Aorta (tissue), 5 donors: ENCODE measurements at regions of chr4 and their contacts with region 1.

Region 1: DNA sequence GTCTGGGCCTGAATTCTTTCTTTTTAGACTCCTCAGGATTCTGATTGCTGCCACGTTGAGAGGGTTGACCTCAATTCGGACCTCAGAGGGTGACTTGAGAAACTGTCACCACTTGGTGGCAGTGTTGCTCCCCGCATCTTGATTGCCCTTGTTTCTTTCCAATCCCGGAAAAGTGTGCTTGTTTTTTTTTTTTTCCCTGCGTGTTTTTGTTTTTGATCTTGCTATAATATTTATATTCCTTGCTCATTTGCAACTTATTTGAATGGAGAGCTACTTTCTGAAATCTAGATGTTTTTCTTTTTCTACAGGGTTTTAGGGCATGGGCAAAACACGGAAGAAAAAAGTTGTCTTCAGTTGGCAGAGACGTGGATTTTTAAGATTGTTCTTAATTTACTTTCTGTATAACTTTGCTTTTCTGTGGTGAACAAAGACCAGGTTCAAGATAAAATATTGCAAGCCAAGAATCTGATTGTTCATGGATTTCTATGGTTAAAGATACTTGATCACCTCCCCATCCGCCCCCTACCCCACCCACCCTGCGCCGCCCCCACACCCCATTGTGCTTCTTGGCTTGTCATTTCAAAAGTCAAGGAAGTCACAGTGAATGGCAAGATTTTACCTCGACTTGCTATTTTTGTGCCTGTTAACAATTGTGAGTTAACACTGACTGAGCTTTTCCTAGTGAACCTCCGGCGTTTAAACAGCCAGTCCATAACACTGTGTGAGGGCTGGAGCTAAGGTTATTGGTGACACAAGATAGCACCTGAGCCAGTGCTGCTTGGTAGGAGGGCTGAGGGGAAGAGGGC is 102.1 kb downstream of the PTTG2 start:
- DNase-seq: peak; percentile 83 to 86
- ATAC-seq: peak; percentile 86
- H3K4me3 ChIP-seq: peak overlapping the region; percentile 29 to 55
- H3K27ac ChIP-seq: peak overlapping the region; percentile 7 to 82
- H3K4me1 ChIP-seq: no peaks in the 10 kb centered on the region
- H3K27me3 ChIP-seq: no peaks in the 10 kb centered on the region

Region 2: GRCh38 chr4:38179690-38180377 is 117.5 kb after region 1 on chr4:
- intact Hi-C with region 1: loop called in 1 of 2 experiments (anchors 5 kb)
- DNase-seq: peak; percentile 75 to 85
- ATAC-seq: peak; percentile 87
- H3K4me3 ChIP-seq: no peak overlapping the region
- H3K27ac ChIP-seq: no peak overlapping the region
- H3K4me1 ChIP-seq: no peaks in the 10 kb centered on the region
- H3K27me3 ChIP-seq: no peaks in the 10 kb centered on the region

Region 3: GRCh38 chr4:38675146-38676121 is 613.1 kb after region 1 on chr4:
- intact Hi-C with region 1: loop called in 1 of 2 experiments (anchors 10 kb)
- DNase-seq: peak; percentile 80 to 83
- ATAC-seq: peak; percentile 71
- H3K4me3 ChIP-seq: no peak overlapping the region
- H3K27ac ChIP-seq: no peak overlapping the region
- H3K4me1 ChIP-seq: peaks cover 3 to 5% of the 10 kb centered on the region in 2 donors
- H3K27me3 ChIP-seq: no peaks in the 10 kb centered on the region

Region 4: DNA sequence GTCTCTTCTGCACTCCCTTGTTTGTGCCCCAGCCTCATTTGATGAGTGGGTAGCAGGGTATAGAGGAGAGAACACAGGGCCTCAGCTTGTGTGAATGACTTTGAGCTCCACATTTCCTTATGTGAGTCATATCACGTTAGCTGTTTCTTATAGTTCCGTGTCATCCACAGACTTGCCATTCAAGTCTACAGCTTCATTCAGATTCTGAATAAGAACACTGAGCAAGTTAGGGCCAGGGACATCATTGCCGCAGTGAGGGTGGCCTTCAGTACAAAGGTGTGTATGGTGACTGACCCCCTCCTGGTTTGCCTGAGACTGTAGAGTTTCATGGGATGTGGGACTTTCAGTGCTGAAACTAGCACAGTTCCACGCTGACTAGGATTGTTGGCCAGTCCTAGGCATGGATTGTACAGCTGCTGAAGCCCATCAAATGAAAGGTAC is 625.3 kb after region 1 on chr4:
- intact Hi-C with region 1: loop called in 1 of 2 experiments (anchors 5 kb)
- DNase-seq: no peak
- ATAC-seq: no peak
- H3K4me3 ChIP-seq: no peak overlapping the region
- H3K27ac ChIP-seq: peak overlapping the region in 1 of 2 donors; percentile 40
- H3K4me1 ChIP-seq: peaks cover 7 to 11% of the 10 kb centered on the region in 2 donors
- H3K27me3 ChIP-seq: no peaks in the 10 kb centered on the region

Region 5: GRCh38 chr4:38730830-38731646 is 668.7 kb after region 1 on chr4:
- intact Hi-C with region 1: loop called (anchors 5 kb)
- DNase-seq: peak; percentile 89 to 94
- ATAC-seq: peak; percentile 90
- H3K4me3 ChIP-seq: no peak overlapping the region
- H3K27ac ChIP-seq: no peak overlapping the region
- H3K4me1 ChIP-seq: no peaks in the 10 kb centered on the region
- H3K27me3 ChIP-seq: no peaks in the 10 kb centered on the region